HEK293T (cell line): ENCODE measurements at regions of chr20 and their contacts with region 1.

Region 1: GRCh38 chr20:21520702-21521595 is 7.1 kb upstream of the NKX2-2 start:
- DNase-seq: peak; percentile 67

Region 2: GRCh38 chr20:20837574-20838021 is 683.4 kb before region 1 on chr20:
- CTCF ChIA-PET with region 1: interaction called, 4 read pairs
- POLR2A ChIA-PET with region 1: interaction called, 12 read pairs
- DNase-seq: peak; percentile 73

Region 3: DNA sequence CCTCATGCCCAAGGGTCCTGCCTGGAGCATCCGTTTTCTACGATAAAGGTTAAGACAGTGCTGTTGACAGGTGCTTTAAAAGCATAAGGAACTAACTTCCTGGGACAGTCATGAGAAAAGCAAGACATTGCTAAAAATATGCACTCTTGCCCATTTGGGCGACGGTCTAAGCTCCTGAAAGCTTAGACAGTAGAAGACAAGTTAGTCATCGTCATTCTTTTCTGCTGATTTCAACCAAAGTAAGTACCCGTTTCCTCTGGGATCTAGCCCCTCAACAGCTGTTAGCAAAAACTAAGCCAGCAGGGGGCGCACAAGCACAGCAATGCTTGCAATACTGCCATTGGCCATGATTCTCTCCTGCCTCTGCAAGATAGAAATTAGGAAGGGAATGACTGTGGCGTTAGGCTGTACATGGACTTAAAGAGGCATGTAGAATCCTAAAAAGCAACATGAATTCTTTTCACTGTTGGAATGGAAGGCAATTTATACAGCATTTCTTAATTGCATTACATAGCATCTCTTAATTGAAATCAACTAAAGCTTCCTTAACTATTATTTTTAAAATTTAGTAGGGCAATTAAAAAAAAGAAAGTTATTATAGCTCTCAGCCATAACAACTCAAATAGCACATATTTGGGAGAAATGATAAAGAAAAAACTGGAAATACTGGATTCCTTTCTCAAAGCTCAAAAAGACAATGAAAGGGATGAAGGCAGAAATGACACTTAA is 660.7 kb before region 1 on chr20:
- CTCF ChIA-PET with region 1: interaction called, 12 read pairs
- POLR2A ChIA-PET with region 1: no interaction called
- DNase-seq: peak; percentile 82

Region 4: DNA sequence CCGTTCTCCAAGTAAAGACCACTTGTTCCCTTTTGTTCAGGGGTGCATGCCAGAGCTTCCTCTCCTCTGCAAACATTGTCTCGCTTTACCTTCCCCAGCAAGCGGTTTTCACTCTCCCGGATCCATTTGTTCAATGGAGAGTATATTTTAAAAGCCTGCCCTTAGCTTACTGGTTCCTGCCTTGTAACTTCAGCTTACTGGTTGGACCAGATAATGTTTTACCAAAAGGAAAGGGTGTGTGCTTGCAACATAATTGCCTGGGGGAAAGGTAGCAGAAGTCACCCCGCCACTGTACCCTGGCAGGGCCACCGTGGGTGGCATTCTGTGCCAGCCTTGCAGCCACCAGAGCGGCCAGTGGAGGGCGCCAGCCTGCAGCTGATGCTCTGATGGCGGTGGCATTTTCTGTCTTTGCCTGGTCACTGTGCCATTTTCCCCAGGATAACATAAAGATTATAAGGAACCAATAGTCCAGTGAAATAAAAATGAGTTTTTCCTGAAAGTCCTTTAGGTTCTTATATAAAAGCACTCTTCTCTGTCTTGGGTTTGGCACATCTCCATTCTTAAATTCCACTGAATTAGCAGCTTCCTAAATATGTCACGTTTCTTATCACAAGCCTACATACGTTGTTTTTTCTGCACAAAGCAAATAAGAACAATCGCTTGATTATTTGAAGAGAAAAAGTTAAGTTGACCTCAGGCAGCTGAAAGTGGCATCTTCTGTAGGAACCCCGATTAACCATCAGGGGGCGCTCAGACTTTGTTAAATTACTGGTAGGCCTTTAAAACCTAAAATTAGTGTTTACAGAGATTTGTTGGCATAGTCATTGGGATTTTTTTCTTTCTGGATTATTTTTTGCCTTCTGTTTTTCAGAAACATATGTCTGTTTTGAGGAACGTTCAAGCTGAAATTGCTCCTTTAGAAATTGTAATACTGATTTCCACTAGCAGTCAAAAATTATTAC is 285.2 kb before region 1 on chr20:
- CTCF ChIA-PET with region 1: interaction called, 20 read pairs
- POLR2A ChIA-PET with region 1: interaction called, 3 read pairs
- DNase-seq: peak; percentile 59

Region 5: GRCh38 chr20:21505161-21505809 is 15.7 kb before region 1 on chr20:
- CTCF ChIA-PET with region 1: interaction called, 25 read pairs
- POLR2A ChIA-PET with region 1: interaction called, 7 read pairs
- DNase-seq: peak; percentile 82